Endothelial cell of umbilical vein (primary cell): ENCODE measurements at regions of chr1 and their contacts with region 1.

Region 1: DNA sequence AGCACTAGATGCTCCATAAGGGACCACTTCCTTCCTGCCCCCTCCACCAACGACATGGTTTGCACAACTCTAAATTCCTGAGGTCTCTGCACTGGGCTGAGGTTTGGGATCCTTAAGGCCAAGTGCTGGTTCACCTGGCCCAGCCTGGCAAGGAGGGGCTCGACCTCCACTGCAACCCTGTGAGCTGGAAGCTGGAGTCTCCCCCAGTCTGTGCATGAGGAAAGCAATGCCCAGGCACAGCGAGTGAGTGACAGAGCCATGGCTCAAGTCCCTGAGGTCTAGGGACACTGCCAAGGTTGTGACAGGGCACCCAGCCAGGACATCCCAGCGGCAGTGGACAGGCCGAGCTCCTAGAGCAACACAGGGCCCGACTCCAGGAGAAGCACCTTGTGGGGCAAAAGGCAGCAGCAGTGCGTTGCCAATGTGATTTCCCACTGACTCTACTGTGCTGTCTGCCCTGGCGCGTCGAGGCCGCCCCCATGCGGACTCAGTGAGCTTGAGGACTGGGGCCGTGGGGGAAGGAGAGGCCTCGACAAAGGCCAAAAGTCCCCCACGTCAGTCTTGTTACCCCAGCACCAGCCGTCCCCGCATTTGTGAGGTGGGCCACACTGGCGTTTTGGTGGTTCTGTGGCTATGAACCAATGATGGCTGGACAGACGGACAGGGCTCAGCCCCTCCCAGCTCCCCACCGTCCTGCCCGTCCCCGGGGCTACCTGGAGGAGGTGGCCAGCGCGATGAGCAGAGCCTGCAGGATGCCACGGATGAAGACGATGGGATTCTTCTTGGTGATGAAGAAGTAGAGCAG is 30.0 kb downstream of the PODN start:
- DNase-seq: no peak
- H3K4me3 ChIP-seq: no peak overlapping the region
- H3K27ac ChIP-seq: no peak overlapping the region
- H3K4me1 ChIP-seq: no peaks in the 10 kb centered on the region
- H3K27me3 ChIP-seq: no peaks in the 10 kb centered on the region
- CTCF ChIP-seq: no peak
- POLR2A ChIP-seq: no peak

Region 2: DNA sequence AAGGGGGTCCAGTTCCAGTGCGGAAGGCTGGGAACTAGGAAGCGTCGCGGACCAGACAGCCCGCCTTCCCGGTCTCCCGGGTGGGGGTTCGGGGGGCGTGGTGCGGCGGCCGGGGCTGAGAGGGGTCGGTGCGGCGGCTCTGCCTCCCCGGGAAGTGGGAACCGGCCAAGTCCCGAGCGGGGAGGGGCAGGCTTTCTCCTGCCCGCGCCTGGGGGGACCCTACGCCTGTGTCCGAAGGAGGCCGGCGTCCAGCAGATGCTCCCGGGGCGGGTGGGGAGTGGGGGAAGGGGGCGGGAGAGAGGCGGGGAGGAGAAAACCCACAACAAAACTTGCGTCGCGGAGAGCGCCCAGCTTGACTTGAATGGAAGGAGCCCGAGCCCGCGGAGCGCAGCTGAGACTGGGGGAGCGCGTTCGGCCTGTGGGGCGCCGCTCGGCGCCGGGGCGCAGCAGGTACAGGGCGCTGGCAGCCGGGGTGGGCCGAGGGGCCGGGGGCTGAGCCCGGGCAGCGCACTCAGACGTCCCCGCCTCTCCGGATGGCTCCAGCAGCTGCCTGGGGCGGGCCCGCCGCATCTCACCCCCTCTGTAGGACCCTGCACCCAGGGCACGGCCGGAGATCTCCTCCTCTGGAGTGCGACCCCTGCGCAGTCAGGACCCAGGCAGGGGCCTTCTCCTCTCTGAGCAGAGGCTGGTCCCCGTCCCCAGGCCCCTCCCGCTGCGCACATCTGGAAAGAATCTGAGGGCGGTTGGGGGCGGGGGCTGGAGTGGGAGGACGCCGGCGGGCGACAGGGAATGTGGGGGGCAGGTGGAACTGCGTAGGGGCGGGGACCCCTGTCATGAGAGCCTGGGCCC is 30.0 kb before region 1 on chr1 and contains the start of gene PODN:
- CTCF ChIA-PET with region 1: no interaction called
- POLR2A ChIA-PET with region 1: no interaction called
- dilution Hi-C with region 1: no loop called
- intact Hi-C with region 1: no loop called
- DNase-seq: no peak
- H3K4me3 ChIP-seq: peak within 1 kb of the TSS; percentile 27 to 47 (median 30)
- H3K27ac ChIP-seq: no peak within 1 kb of the TSS
- H3K4me1 ChIP-seq: peaks cover 8% of the 10 kb centered on the region
- H3K27me3 ChIP-seq: peaks cover 6 to 31% of the 10 kb centered on the region in 2 experiments
- CTCF ChIP-seq: no peak
- POLR2A ChIP-seq: no peak
- total RNA-seq, gene PODN: 1.5 and 2.0 TPM in 2 replicates

Region 3: GRCh38 chr1:53107570-53108322 is 15.7 kb after region 1 on chr1:
- CTCF ChIA-PET with region 1: interaction called, 11 read pairs
- POLR2A ChIA-PET with region 1: no interaction called
- dilution Hi-C with region 1: no loop called
- intact Hi-C with region 1: no loop called
- DNase-seq: no peak
- H3K4me3 ChIP-seq: no peak overlapping the region
- H3K27ac ChIP-seq: no peak overlapping the region
- H3K4me1 ChIP-seq: no peaks in the 10 kb centered on the region
- H3K27me3 ChIP-seq: no peaks in the 10 kb centered on the region
- CTCF ChIP-seq: no peak
- POLR2A ChIP-seq: no peak

Region 4: DNA sequence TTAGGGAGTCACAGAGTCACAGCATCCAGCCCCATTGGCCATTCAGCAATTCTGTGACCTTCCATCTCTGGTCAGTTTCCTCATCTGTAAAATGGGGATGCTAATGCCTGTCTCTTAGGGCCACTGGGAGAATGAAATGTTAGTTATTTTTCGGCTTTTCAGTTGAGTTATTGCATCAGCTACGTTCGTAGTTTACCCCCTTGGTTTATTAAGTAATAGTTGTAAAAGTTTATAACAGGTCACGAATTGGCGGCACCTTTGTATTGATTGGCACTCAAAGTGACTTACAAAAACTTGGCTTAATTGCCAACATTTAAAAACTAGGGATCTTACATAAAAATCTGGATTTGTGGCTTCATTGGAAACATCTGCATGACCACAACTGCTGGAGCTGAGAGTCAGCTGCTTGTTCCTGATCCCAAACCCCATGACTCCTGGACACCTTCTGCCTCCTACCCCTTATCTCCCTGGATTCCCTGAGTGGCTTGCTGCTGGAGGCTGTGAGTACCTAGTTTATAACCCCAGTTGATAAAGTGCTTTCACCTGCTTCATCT is 73.4 kb after region 1 on chr1:
- CTCF ChIA-PET with region 1: no interaction called
- POLR2A ChIA-PET with region 1: no interaction called
- dilution Hi-C with region 1: no loop called
- intact Hi-C with region 1: no loop called
- DNase-seq: no peak
- H3K4me3 ChIP-seq: no peak overlapping the region
- H3K27ac ChIP-seq: no peak overlapping the region
- H3K4me1 ChIP-seq: no peaks in the 10 kb centered on the region
- H3K27me3 ChIP-seq: peaks cover 14% of the 10 kb centered on the region in 2 experiments
- CTCF ChIP-seq: no peak
- POLR2A ChIP-seq: no peak